ENCODE measurements at regions of chr11 and their contacts with region 1.

Region 1: GRCh38 chr11:27485930-27486773 is 13.6 kb upstream of the LGR4 start:
- DNase-seq: peak in 1 of 2 experiments; percentile 54
- H3K4me3 ChIP-seq: no peak overlapping the region
- H3K27ac ChIP-seq: no peak overlapping the region
- H3K4me1 ChIP-seq: no peaks in the 10 kb centered on the region
- H3K27me3 ChIP-seq: no peaks in the 10 kb centered on the region
- CTCF ChIP-seq: peak; percentile 95

Region 2: GRCh38 chr11:26297189-26297975 is 1188.8 kb before region 1 on chr11:
- CTCF ChIA-PET with region 1: no interaction called
- POLR2A ChIA-PET with region 1: no interaction called
- intact Hi-C with region 1: loop called (anchors 2 kb)
- DNase-seq: peak; percentile 7 to 63
- H3K4me3 ChIP-seq: no peak overlapping the region
- H3K27ac ChIP-seq: no peak overlapping the region
- H3K4me1 ChIP-seq: no peaks in the 10 kb centered on the region
- H3K27me3 ChIP-seq: no peaks in the 10 kb centered on the region
- CTCF ChIP-seq: peak; percentile 84

Region 3: DNA sequence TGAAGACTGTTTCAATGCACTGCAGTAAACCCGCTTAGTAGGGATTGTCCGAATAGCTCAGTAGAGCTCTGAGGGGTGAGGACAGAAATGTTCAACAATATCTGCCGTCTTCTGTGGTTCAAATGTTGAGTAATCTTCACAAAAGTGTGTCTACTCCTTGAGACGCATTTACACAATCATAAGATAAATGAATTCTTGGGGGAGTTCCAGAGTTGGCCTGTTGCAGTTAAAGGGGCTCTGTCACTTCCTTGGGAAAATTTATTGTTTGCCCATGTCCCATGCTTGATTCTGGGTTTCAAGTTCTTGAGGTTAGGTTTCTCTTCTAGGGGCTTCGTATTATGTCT is 1153.6 kb before region 1 on chr11:
- CTCF ChIA-PET with region 1: interaction called, 12 read pairs
- POLR2A ChIA-PET with region 1: no interaction called
- intact Hi-C with region 1: no loop called
- DNase-seq: no peak
- H3K4me3 ChIP-seq: no peak overlapping the region
- H3K27ac ChIP-seq: no peak overlapping the region
- H3K4me1 ChIP-seq: no peaks in the 10 kb centered on the region
- H3K27me3 ChIP-seq: no peaks in the 10 kb centered on the region
- CTCF ChIP-seq: no peak

Region 4: GRCh38 chr11:26753723-26754504 is 732.2 kb before region 1 on chr11:
- CTCF ChIA-PET with region 1: no interaction called
- POLR2A ChIA-PET with region 1: no interaction called
- intact Hi-C with region 1: loop called (anchors 5 kb)
- DNase-seq: peak; percentile 8 to 38
- H3K4me3 ChIP-seq: no peak overlapping the region
- H3K27ac ChIP-seq: no peak overlapping the region
- H3K4me1 ChIP-seq: no peaks in the 10 kb centered on the region
- H3K27me3 ChIP-seq: no peaks in the 10 kb centered on the region
- CTCF ChIP-seq: peak; percentile 83

Region 5: DNA sequence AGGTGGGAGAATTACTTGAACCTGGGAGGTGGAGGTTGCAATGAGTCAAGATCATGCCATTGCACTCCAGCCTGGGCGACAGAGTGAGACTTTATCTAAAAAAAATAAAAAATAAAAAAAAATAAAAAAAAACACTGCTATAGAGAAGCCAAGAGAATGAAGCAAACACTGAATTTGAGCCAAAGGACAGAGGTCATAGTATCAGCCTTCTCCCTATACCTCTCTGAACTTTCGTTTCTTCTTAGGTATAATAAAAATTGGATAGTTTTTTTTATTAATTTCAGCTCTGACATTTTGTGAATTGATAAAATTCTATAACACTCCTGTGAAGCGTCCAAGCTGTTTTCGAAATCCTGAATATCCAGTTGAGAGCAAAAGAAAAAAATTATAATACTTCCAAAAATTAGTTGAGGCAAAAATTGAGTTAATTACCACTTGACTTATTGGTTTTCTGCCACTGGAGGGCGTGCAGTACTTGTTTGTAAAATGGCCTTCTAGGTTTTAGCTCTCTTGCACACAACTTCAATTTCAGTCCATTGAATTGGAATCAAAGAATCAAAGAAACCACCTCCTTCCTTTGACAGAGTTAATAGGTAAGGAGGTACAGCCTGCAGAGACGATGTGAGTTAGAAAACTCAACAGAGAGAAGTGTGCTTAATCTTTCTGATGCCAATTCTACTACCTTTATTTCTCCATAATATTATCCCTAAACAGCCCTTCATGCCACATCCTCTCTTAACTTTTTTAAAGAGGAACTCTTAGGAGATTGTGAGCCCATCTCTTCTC is 302.3 kb before region 1 on chr11:
- CTCF ChIA-PET with region 1: interaction called, 7 read pairs
- POLR2A ChIA-PET with region 1: no interaction called
- intact Hi-C with region 1: loop called (anchors 1 kb)
- DNase-seq: peak; percentile 33 to 56
- H3K4me3 ChIP-seq: no peak overlapping the region
- H3K27ac ChIP-seq: no peak overlapping the region
- H3K4me1 ChIP-seq: no peaks in the 10 kb centered on the region
- H3K27me3 ChIP-seq: no peaks in the 10 kb centered on the region
- CTCF ChIP-seq: peak; percentile 86

Region 6: DNA sequence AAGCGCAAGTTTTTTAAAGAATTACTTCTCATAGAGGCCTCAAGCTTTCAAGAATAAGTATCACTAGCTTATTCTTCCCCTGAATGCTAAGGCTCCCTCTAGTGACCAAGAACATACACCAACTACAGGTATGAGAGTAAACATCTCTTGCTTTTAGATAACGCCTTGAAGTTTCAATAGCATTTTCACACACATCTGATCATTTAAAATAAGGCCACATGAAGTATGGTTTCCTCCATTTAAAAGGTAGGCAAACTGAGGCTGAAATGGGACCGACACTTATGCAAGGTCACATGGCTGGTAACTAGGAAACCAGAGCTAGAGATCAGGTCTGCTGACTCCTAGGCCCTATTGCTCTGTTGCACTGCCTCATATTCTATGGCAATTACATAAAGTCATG is 189.7 kb before region 1 on chr11:
- CTCF ChIA-PET with region 1: interaction called, 7 read pairs
- POLR2A ChIA-PET with region 1: interaction called, 3 read pairs
- intact Hi-C with region 1: loop called (anchors 1 kb)
- DNase-seq: peak in 1 of 2 experiments; percentile 4
- H3K4me3 ChIP-seq: no peak overlapping the region
- H3K27ac ChIP-seq: no peak overlapping the region
- H3K4me1 ChIP-seq: no peaks in the 10 kb centered on the region
- H3K27me3 ChIP-seq: no peaks in the 10 kb centered on the region
- CTCF ChIP-seq: peak; percentile 74